AG04449 (cell line): ENCODE measurements at regions of chr1 and their contacts with region 1.

Region 1: DNA sequence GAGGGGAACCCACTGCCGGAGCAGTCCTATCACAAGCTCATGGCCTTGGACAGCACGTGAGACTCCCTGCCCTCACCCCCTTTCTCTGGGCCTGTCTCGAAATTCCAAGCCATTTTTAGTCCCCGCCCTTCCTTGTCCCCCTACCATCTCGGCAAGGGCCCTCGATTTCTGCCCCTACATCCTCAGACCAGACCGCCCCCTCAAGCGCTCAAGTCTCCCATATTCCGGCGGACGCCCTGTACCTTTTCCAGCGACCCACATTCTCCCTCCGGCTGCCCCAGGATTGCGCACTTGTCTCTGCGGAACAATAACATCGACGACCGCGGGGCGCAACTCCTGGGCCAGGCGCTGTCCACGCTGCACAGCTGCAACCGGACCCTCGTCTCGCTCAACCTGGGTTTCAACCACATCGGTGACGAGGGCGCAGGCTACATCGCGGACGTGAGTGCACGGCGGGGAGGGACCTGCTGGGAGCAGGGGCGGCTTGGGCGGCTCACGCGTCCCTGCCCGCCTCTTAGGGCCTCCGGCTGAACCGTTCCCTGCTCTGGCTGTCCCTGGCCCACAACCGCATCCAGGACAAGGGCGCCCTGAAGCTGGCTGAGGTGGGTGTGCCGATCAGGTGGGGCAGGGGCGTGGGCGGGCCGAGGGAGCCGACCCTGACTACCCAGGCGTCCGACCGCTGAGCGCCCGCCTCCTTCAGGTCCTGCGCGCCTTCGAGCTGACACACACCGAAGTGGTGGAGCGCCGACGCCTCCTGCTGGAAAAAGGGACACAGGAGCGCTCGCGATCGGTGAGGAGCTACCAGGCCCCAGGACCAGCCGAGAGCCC is 7.0 kb downstream of the LRRC71 start:
- DNase-seq: no peak
- H3K4me3 ChIP-seq: peak overlapping the region; percentile 55
- CTCF ChIP-seq: peak; percentile 94

Region 2: DNA sequence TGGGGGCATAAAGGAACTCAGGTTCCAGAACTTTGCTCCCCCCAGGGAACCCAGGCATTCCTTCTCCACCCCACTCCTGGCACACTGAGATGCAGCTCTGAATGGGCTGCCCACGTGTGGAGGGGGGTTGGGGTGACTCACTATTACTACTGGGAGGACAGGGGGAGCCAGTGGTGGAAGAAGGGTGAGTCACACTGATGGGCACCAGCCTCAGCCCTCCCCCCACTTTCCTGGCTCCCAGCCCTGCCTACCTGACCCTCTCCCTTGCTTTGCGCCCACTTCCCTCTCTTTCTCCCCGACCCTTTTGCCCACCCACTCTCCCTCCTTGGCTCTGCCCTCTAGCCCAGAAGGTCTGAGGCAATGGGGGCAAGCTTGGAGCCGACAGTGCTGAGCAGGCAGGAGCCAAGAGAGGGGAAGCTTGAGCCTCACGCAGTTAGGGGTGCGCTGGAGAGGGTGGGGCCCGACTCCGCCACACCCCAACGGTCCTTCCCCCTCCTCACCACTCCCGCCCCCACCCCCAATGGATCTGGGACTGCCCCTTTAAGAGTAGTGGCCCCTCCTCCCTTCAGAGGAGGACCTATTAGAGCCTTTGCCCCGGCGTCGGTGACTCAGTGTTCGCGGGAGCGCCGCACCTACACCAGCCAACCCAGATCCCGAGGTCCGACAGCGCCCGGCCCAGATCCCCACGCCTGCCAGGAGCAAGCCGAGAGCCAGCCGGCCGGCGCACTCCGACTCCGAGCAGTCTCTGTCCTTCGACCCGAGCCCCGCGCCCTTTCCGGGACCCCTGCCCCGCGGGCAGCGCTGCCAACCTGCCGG is 813.1 kb before region 1 on chr1 and contains the start of gene LMNA:
- CTCF ChIA-PET with region 1: no interaction called
- POLR2A ChIA-PET with region 1: no interaction called
- DNase-seq: peak; percentile 78
- H3K4me3 ChIP-seq: peak within 1 kb of the TSS; percentile 100
- CTCF ChIP-seq: no peak

Region 3: GRCh38 chr1:156876281-156876680 is 51.1 kb before region 1 on chr1:
- CTCF ChIA-PET with region 1: interaction called, 678 read pairs
- POLR2A ChIA-PET with region 1: no interaction called
- DNase-seq: no peak
- H3K4me3 ChIP-seq: no peak overlapping the region
- CTCF ChIP-seq: peak; percentile 21

Region 4: DNA sequence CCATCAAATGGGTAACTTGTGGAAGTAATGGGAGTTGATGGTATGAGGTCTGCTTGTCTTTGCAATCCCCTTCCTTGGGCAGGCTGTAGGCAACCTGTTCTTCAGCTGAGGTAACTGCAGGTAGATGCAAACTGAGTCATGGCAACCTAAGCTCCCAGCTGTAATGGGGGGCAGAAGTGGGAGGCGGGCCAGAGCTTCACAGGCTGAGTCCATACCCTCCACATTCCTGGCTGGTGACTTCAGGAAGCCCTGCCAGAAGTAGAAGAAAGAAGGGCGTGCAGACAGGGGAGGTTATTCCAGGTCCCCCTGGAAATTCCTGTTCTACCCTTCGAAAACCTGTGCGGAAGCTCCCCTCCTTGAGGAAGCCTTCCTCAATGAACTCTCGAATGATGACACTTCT is 73.3 kb after region 1 on chr1:
- CTCF ChIA-PET with region 1: no interaction called
- POLR2A ChIA-PET with region 1: no interaction called
- DNase-seq: no peak
- H3K4me3 ChIP-seq: no peak overlapping the region
- CTCF ChIP-seq: no peak